GM12878 (cell line): ENCODE measurements at regions of chr20 and their contacts with region 1.

Region 1: DNA sequence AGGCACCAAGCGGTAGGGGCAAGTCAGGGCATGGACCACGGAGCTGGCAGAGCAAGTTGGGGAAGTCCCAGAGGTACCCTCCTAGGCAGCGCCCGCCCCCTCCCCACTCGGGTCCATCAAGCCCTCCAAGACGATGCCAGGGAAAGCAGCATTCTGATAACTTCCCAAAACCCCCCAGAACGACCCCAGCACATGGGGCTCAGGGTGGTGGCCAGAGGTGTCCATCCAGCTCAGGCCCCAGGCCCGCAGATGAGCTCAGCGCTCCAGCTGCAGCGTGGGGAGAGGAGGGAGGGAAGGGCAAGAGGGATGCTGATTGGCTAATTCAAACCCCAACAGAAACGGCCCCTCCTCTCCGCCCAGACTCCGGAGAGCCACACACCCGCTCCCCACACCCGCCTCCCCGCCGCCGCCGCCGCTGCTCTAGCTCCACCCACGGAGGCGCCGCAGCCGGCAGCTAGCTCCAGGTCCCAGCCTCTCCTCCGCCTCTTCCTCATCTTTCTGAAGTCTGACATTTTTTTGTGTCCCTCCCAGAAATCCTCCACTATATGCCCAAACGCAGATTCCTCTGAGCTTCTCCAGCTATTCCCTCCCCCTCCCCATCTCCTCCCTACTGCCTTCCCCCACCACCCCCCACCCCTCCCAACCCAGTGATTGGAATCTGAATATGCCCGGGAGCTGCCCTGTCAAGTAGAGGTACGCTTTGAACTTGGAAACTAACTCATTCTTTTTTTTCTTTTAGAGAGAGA is 40.3 kb upstream of the TLDC2 start:
- DNase-seq: peak; percentile 87
- ATAC-seq: peak; percentile 95
- H3K4me3 ChIP-seq: peak overlapping the region; percentile 63
- H3K27ac ChIP-seq: peak overlapping the region; percentile 90
- H3K4me1 ChIP-seq: peaks cover 17% of the 10 kb centered on the region
- H3K27me3 ChIP-seq: no peaks in the 10 kb centered on the region
- CTCF ChIP-seq: no peak
- EP300 ChIP-seq: no peak
- POLR2A ChIP-seq: peak; percentile 71; the same call in 1 of the 2 replicates
- RAD21 ChIP-seq: no peak

Region 2: DNA sequence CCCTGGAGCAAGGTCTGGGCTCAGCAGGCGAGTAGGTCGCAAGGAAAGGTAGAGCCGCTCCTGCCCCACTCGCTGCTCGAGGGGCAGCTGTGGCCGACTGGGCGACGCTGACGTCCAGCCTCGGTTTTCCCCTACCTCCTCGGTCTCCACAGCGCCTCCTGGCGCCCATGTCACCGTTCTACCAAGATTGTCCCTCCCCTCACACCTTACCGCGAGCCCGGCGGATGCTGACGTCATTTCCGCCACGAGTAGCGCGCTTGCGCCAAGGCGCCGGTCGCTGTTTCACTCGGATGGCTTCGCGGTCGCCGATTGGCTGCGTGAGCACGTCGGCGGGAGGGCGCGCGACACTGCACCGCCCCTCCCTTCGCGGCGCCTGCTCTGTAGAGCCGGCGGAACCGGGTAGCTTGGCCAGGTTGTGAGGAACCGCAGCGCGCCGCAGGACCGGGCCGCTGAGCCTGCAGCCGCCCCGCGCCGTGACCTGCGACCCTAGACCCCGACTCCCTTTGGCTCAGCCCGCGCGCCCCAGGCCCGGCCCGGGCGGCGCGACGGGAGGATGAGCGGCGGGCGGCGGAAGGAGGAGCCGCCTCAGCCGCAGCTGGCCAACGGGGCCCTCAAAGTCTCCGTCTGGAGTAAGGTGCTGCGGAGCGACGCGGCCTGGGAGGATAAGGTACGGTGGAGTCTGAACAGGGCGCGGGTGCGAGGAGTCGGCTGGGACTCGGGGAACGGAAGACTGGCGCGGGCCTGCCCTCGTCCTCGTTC is 230.0 kb before region 1 on chr20 and contains the start of gene RAB5IF:
- CTCF ChIA-PET with region 1: interaction called, 13 read pairs
- POLR2A ChIA-PET with region 1: interaction called, 5 read pairs
- RAD21 ChIA-PET with region 1: interaction called, 9 read pairs
- SMC1A ChIA-PET with region 1: no interaction called
- in situ Hi-C with region 1: no loop called
- intact Hi-C with region 1: no loop called
- DNase-seq: peak; percentile 99
- ATAC-seq: peak; percentile 92
- H3K4me3 ChIP-seq: peak within 1 kb of the TSS; percentile 98
- H3K27ac ChIP-seq: peak within 1 kb of the TSS; percentile 97
- H3K4me1 ChIP-seq: peaks cover 20% of the 10 kb centered on the region
- H3K27me3 ChIP-seq: no peaks in the 10 kb centered on the region
- CTCF ChIP-seq: peak; percentile 94 to 99 (median 96); a peak in 5 of 6 replicates
- EP300 ChIP-seq: peak in 1 of 2 experiments; percentile 54; a peak in 1 of 4 replicates
- POLR2A ChIP-seq: peak; percentile 96
- RAD21 ChIP-seq: peak; percentile 61
- polyA plus RNA-seq, gene RAB5IF: 19.4 to 62.9 TPM

Region 3: GRCh38 chr20:36754656-36755222 is 80.9 kb before region 1 on chr20:
- CTCF ChIA-PET with region 1: interaction called, 10 read pairs
- POLR2A ChIA-PET with region 1: interaction called, 3 read pairs
- RAD21 ChIA-PET with region 1: interaction called, 12 read pairs
- SMC1A ChIA-PET with region 1: interaction called, 4 read pairs
- in situ Hi-C with region 1: no loop called
- intact Hi-C with region 1: no loop called
- DNase-seq: no peak
- ATAC-seq: peak; percentile 85
- H3K4me3 ChIP-seq: no peak overlapping the region
- H3K27ac ChIP-seq: 0 out of 2 replicates have a peak overlapping the region, but pooled peaks have one; percentile 20
- H3K4me1 ChIP-seq: peaks cover 13% of the 10 kb centered on the region
- H3K27me3 ChIP-seq: no peaks in the 10 kb centered on the region
- CTCF ChIP-seq: peak; percentile 77 to 81 (median 79)
- EP300 ChIP-seq: no peak
- POLR2A ChIP-seq: no peak
- RAD21 ChIP-seq: peak; percentile 76

Region 4: DNA sequence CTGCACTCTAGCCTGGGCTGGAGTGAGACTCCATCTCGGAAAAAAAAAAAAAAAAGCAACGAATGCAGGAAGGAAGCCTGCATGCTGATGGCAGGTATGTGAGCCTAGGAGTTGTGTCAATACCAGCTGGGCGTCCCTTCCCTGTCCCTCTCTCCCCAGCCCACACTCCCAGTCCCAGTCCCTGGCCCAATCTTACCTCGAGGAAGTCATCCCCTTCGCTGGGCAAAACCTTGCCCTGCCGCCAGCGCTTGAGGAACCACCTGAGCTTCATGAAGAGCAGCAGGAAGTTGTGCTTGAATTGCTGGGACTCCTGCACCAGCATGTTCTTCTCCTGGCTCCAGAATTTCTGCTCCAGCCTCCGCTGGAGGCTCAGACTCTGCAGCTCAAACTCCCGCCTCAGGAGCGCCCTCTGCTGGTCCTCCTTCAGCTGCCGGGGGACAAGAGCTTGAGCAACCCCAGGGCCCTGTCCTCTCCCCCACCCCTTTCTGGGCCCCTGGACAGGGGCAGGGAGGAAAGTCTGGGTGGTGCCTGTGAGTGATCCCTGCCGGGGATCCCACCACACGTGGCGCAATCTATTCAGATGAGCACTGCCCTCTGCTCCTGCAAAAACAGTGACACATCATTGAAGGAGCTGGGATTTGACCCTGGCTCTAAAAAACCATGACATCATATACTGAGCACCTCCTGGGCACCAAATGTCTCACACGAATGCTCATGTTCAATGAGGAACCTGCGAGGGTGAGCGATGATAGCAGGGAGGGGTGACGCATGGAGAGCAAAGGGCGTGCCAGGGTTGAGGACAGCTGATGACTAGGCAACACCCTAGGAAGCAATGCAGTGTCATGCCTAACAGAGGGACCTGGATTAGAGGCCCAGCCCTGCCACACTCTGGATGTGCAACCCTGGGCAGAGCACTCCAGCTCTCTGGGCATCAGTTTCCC is 27.0 kb before region 1 on chr20:
- CTCF ChIA-PET with region 1: interaction called, 48 read pairs
- POLR2A ChIA-PET with region 1: no interaction called
- RAD21 ChIA-PET with region 1: interaction called, 33 read pairs
- SMC1A ChIA-PET with region 1: interaction called, 5 read pairs
- in situ Hi-C with region 1: no loop called
- intact Hi-C with region 1: no loop called
- DNase-seq: no peak
- ATAC-seq: peak; percentile 88
- H3K4me3 ChIP-seq: no peak overlapping the region
- H3K27ac ChIP-seq: no peak overlapping the region
- H3K4me1 ChIP-seq: no peaks in the 10 kb centered on the region; the same call in 1 of the 2 replicates
- H3K27me3 ChIP-seq: no peaks in the 10 kb centered on the region
- CTCF ChIP-seq: peak; percentile 72 to 91 (median 85)
- EP300 ChIP-seq: no peak
- POLR2A ChIP-seq: no peak
- RAD21 ChIP-seq: peak; percentile 56

Region 5: GRCh38 chr20:36856691-36857635 is 21.3 kb after region 1 on chr20:
- CTCF ChIA-PET with region 1: interaction called, 349 read pairs
- POLR2A ChIA-PET with region 1: interaction called, 114 read pairs
- RAD21 ChIA-PET with region 1: interaction called, 215 read pairs
- SMC1A ChIA-PET with region 1: interaction called, 51 read pairs
- in situ Hi-C with region 1: no loop called
- intact Hi-C with region 1: loop called (anchors 1 kb)
- DNase-seq: no peak
- ATAC-seq: no peak
- H3K4me3 ChIP-seq: no peak overlapping the region
- H3K27ac ChIP-seq: no peak overlapping the region
- H3K4me1 ChIP-seq: peaks cover 19% of the 10 kb centered on the region
- H3K27me3 ChIP-seq: no peaks in the 10 kb centered on the region
- CTCF ChIP-seq: no peak
- EP300 ChIP-seq: no peak
- POLR2A ChIP-seq: no peak
- RAD21 ChIP-seq: no peak

Region 6: DNA sequence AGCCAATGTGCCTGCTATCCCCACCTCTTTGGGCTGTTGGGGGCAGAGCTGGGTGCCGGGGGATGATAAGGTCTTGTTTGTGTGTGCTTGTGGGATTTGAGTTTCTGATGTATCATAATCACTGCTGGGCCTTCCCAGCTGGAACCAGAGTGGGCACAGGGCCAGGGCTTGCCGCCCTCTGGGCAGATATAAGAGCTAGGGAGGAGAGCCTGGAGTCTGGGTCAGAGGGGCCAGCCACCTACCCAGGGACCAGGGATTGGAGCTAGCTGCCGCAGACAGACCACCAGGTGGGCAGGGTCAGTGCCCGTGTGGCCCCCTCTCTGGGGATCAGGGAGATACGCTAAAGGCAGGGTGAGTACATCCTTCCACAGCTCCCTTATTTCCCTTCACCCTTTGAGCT is 37.2 kb after region 1 on chr20:
- CTCF ChIA-PET with region 1: interaction called, 349 read pairs
- POLR2A ChIA-PET with region 1: interaction called, 6 read pairs
- RAD21 ChIA-PET with region 1: interaction called, 32 read pairs
- SMC1A ChIA-PET with region 1: interaction called, 14 read pairs
- in situ Hi-C with region 1: no loop called
- intact Hi-C with region 1: no loop called
- DNase-seq: no peak
- ATAC-seq: no peak
- H3K4me3 ChIP-seq: no peak overlapping the region
- H3K27ac ChIP-seq: no peak overlapping the region
- H3K4me1 ChIP-seq: peaks cover 37% of the 10 kb centered on the region
- H3K27me3 ChIP-seq: no peaks in the 10 kb centered on the region
- CTCF ChIP-seq: no peak
- EP300 ChIP-seq: no peak
- POLR2A ChIP-seq: no peak
- RAD21 ChIP-seq: no peak

Region 7: GRCh38 chr20:36886859-36887751 is 51.5 kb after region 1 on chr20:
- CTCF ChIA-PET with region 1: interaction called, 82 read pairs
- POLR2A ChIA-PET with region 1: interaction called, 41 read pairs
- RAD21 ChIA-PET with region 1: interaction called, 83 read pairs
- SMC1A ChIA-PET with region 1: interaction called, 51 read pairs
- in situ Hi-C with region 1: no loop called
- intact Hi-C with region 1: loop called (anchors 1 kb)
- DNase-seq: peak; percentile 56
- ATAC-seq: peak; percentile 95
- H3K4me3 ChIP-seq: no peak overlapping the region
- H3K27ac ChIP-seq: 0 out of 2 replicates have a peak overlapping the region, but pooled peaks have one; percentile 9
- H3K4me1 ChIP-seq: peaks cover 9% of the 10 kb centered on the region
- H3K27me3 ChIP-seq: no peaks in the 10 kb centered on the region
- CTCF ChIP-seq: peak; percentile 97 to 99 (median 98)
- EP300 ChIP-seq: no peak
- POLR2A ChIP-seq: no peak
- RAD21 ChIP-seq: peak; percentile 96